Heart right ventricle (tissue), 16 donors: ENCODE measurements at regions of chr10 and their contacts with region 1.

Region 1: DNA sequence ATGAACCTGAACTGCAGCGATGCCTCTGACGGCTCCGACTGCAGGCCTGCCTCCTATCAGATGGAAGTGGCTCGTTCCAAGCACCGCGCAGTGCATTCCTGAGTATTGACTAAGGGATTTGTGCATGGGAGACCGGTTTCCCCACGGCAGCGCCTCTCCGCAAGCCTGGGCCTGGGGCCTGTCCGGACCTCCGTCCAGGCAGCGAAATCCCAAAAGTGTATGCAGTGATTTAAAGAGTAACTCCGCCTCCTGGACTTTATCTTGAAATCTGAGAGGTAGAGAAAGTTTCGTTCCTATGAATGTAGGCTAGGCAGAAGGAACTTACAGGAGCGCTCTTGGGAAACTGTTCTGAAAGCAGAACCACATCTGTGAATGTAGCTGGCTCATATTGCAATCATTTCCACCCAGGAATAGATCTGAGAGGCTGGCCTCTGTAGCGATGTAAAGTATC is 106.2 kb upstream of the CELF2 start:
- DNase-seq: peak; percentile 58 to 64
- ATAC-seq: peak; percentile 58 to 84 (median 80)
- H3K4me3 ChIP-seq: peak overlapping the region in 9 of 10 donors; percentile 1 to 44 (median 35)
- H3K27ac ChIP-seq: peak overlapping the region; percentile 6 to 91 (median 82)
- H3K4me1 ChIP-seq: peaks cover 3 to 48% (median 37%) of the 10 kb centered on the region in 9 donors
- H3K27me3 ChIP-seq: no peaks in the 10 kb centered on the region
- CTCF ChIP-seq: no peak

Region 2: GRCh38 chr10:10792681-10793080 is 118.8 kb before region 1 on chr10:
- intact Hi-C with region 1: loop called in 1 of 10 experiments (anchors 10 kb)
- DNase-seq: peak in 1 of 2 donors; percentile 29
- ATAC-seq: peak in 4 of 8 donors; percentile 35 to 82 (median 47)
- H3K4me3 ChIP-seq: no peak overlapping the region
- H3K27ac ChIP-seq: peak overlapping the region in 6 of 10 donors; percentile 36 to 71 (median 54)
- H3K4me1 ChIP-seq: peaks cover 0 to 45% (median 32%) of the 10 kb centered on the region in 9 donors
- H3K27me3 ChIP-seq: no peaks in the 10 kb centered on the region
- CTCF ChIP-seq: no peak

Region 3: DNA sequence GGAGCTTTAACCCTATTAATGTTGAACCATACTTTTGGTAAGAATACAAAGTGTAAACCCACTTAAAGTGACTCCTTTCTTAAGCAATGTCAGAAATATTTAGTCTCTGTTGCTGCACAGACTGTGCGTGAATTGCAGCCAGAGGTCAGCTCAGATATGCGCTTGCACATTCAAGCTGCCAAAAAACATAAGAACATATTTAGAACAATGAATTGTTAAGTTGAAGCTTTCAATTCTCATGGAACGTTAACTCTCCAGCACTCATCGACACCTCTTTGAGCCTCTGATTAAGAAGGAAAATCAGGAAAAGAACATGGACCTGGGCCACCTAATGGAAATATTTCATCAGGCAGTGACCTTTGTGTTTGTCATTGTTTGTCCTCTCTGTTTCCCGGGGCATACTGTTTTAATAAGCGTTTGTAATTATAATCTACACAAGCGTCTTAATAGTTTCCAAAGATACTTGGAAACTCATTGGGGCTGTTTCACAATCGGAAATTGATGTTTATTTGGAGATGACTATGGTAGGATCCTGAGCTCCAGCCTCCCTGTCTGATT is 86.8 kb before region 1 on chr10:
- intact Hi-C with region 1: loop called in 4 of 10 experiments (anchors 5 to 10 kb)
- DNase-seq: peak; percentile 26 to 45
- ATAC-seq: peak; percentile 68 to 93 (median 86)
- H3K4me3 ChIP-seq: peak overlapping the region in 2 of 10 donors; percentile 2 to 25
- H3K27ac ChIP-seq: peak overlapping the region; percentile 44 to 87 (median 78)
- H3K4me1 ChIP-seq: peaks cover 7 to 55% (median 32%) of the 10 kb centered on the region in 9 donors
- H3K27me3 ChIP-seq: no peaks in the 10 kb centered on the region
- CTCF ChIP-seq: peak in 3 of 9 donors; percentile 33 to 43 (median 39)